CD8-positive, alpha-beta memory T cell (primary cell): ENCODE measurements at regions of chr3 and their contacts with region 1.

Region 1: DNA sequence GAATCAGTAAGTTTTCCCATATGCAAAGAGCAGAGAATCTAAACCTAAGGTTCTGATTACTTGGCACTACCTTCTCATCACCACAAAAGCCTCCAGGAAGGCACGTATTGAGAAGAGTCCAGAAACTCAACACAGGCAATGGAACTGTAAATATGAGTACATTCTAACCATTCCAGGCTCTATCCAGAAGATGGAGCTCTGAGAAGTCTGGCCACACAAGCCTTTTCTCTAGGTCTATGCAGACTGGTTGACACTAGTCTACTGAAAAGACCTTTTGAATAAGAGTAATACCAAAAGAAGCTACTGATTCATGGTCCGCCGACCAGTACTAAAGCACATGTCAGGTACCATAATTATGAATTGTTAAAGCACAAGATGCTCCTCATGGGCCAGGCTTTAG is 12.2 kb upstream of the NCKIPSD start:
- DNase-seq: no peak
- H3K4me3 ChIP-seq: no peak overlapping the region
- H3K4me3 Mint-ChIP-seq: no peak overlapping the region
- H3K27ac ChIP-seq: no peak overlapping the region
- H3K27ac Mint-ChIP-seq: no peak overlapping the region
- H3K4me1 ChIP-seq: peaks cover 18% of the 10 kb centered on the region
- H3K4me1 Mint-ChIP-seq: peaks cover 26 to 46% (median 40%) of the 10 kb centered on the region in 3 donors
- H3K27me3 ChIP-seq: no peaks in the 10 kb centered on the region
- H3K27me3 Mint-ChIP-seq: no peaks in the 10 kb centered on the region

Region 2: DNA sequence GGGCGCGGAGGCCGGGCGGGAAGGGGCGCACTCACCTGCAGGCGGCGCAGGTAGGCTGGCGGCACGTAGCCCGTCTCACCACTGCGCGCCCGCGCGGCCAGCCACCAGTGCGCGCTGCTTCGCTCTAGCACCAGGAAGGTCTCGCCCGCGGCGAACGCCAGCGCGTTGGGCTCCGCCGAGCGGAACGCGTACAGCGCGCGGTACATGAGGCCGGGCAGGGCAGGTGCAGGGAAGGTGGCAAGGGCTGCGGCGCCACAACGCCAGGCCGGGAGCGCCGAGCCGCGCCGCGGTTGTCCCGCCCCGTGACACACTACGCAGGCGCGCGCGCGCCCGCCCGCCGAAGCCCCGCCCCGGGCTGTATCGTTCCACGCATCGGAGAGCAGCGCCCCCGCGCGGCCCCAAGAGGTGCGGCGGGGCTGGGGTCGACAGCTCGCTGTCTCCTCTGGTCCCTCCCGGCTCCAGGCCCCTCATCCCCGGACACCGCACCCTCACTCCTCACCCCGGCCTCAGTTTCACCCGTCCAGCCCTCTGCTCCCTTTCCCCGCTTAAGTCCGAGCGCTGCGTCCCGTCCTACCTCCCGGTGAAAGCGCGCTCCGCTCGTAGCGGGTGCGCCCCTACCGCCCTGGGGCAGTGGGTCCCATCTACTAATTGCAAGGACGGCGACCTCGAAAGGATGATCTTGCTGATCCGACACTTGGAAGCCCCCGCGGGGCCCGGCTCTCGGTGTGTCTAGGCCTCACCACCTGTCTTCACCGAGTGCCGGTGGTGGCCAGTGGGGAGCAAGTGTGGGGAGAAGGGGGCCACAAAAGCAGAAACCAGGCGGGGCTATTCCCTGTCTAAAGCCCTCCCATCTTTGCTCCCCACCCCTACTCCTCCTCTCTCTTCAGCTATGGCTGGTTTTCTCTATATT is 12.1 kb before region 1 on chr3 and contains the start of gene NCKIPSD:
- CTCF ChIA-PET with region 1: interaction called, 15 read pairs
- POLR2A ChIA-PET with region 1: no interaction called
- DNase-seq: peak; percentile 86 to 92 (median 90)
- H3K4me3 ChIP-seq: peak within 1 kb of the TSS; percentile 77
- H3K4me3 Mint-ChIP-seq: peak within 1 kb of the TSS; percentile 84 to 99 (median 93)
- H3K27ac ChIP-seq: peak within 1 kb of the TSS; percentile 76
- H3K27ac Mint-ChIP-seq: peak within 1 kb of the TSS; percentile 69 to 94 (median 92)
- H3K4me1 ChIP-seq: peaks cover 18% of the 10 kb centered on the region
- H3K4me1 Mint-ChIP-seq: peaks cover 19 to 32% (median 25%) of the 10 kb centered on the region in 3 donors
- H3K27me3 ChIP-seq: no peaks in the 10 kb centered on the region
- H3K27me3 Mint-ChIP-seq: no peaks in the 10 kb centered on the region
- total RNA-seq, gene NCKIPSD: 29.2 to 30.2 TPM

Region 3: DNA sequence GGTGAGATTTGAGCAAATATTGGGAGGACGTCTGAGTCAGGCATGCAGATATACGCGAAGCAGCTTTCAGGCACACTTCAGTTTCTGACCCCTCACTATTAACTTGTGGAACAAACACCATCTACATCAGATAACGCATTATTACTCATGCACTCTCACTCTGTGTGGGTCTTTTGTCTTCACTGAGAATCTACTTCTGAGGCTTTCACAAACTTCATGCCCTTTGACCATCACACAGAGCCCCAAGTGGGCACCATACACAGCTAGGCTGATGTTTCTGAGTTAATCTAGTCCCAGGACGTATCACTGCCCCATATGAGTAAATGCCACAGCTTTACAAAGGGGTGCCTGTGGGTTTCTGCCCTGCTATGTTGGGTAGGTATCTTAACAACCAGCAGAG is 58.7 kb after region 1 on chr3:
- CTCF ChIA-PET with region 1: no interaction called
- POLR2A ChIA-PET with region 1: interaction called, 14 read pairs
- DNase-seq: no peak
- H3K4me3 ChIP-seq: no peak overlapping the region
- H3K4me3 Mint-ChIP-seq: no peak overlapping the region
- H3K27ac ChIP-seq: no peak overlapping the region
- H3K27ac Mint-ChIP-seq: peak overlapping the region in 3 of 8 donors; percentile 29 to 31 (median 30)
- H3K4me1 ChIP-seq: no peaks in the 10 kb centered on the region
- H3K4me1 Mint-ChIP-seq: no peaks in the 10 kb centered on the region
- H3K27me3 ChIP-seq: no peaks in the 10 kb centered on the region
- H3K27me3 Mint-ChIP-seq: no peaks in the 10 kb centered on the region

Region 4: DNA sequence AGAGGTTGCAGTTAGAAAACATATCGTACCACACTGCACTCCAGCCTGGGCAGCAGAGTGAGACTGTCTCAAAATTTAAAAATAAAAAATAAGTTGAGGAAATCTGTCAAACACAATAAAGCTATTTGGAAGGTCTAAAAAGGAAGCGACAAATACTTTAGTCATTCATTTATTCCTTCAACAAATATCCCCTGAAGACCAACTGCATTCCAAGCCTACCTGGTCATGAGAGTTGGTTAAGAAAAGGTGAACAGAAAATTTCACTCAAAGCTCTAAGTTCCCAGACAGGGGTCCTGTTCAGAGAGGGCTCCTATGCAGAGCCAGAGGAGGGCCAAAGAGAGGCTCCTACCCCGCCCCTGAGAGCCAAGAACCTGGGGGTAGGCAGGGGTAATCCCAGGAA is 165.2 kb after region 1 on chr3:
- CTCF ChIA-PET with region 1: no interaction called
- POLR2A ChIA-PET with region 1: no interaction called
- DNase-seq: no peak
- H3K4me3 ChIP-seq: no peak overlapping the region
- H3K4me3 Mint-ChIP-seq: no peak overlapping the region
- H3K27ac ChIP-seq: no peak overlapping the region
- H3K27ac Mint-ChIP-seq: peak overlapping the region in 1 of 8 donors; percentile 61
- H3K4me1 ChIP-seq: no peaks in the 10 kb centered on the region
- H3K4me1 Mint-ChIP-seq: peaks cover 0 to 2% (median 0%) of the 10 kb centered on the region in 3 donors
- H3K27me3 ChIP-seq: no peaks in the 10 kb centered on the region
- H3K27me3 Mint-ChIP-seq: no peaks in the 10 kb centered on the region

Region 5: DNA sequence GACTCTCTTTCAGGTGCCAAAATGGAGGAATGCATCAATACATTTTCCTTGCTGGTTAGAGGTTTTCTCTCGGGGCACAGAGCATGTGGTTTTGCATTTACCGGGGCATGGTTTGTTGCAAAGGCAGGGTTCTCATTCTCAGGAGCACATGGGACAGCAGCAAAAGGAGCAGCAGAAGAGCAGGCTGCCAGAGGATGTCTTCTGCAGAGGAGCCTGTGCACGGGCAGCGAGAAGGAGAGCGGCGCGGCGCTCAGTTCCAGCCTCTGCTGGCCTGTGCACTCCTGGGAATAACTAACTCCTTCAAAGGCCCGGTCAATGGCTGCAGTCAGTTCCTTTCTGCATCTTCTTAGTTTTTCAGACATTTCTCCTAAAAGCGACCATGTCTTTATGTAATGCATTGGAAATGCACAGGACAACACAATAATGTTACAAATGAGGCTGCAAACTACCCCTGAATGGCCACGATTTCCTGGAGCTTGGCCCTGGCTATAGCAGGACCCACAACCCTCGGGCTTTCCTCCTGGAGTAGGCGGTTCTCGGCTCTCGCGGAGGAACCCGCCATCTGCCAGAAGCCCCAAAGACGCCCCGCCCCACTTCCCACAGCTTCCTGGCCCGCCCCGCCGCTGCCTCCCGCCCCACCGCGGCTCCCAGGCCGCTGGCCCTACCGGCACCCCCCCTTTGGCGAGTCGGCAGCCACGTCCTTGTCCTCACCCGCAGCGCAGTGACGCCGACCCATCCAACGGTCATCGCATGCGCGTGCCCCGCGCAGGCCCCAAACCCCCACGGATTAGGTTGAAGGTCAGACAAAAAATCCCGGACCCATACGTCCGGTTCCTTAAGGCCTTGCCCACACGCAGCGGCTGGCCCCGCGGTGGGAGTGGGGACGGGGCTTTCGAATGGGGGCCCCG is 578.8 kb after region 1 on chr3 and contains the start of gene C3orf62:
- CTCF ChIA-PET with region 1: no interaction called
- POLR2A ChIA-PET with region 1: no interaction called
- DNase-seq: peak; percentile 57 to 78 (median 62)
- H3K4me3 ChIP-seq: peak within 1 kb of the TSS; percentile 60
- H3K4me3 Mint-ChIP-seq: peak within 1 kb of the TSS; percentile 81 to 92 (median 86)
- H3K27ac ChIP-seq: peak within 1 kb of the TSS; percentile 38
- H3K27ac Mint-ChIP-seq: peak within 1 kb of the TSS; percentile 90 to 98 (median 92)
- H3K4me1 ChIP-seq: peaks cover 12% of the 10 kb centered on the region
- H3K4me1 Mint-ChIP-seq: peaks cover 16 to 27% (median 22%) of the 10 kb centered on the region in 3 donors
- H3K27me3 ChIP-seq: no peaks in the 10 kb centered on the region
- H3K27me3 Mint-ChIP-seq: no peaks in the 10 kb centered on the region
- total RNA-seq, gene C3orf62: 6.1 to 6.6 TPM